Endothelial cell of umbilical vein (primary cell): ENCODE measurements at regions of chr3 and their contacts with region 1.

Region 1: GRCh38 chr3:139427283-139427993 is 38.0 kb upstream of the COPB2 start:
- DNase-seq: peak; percentile 69
- H3K4me3 ChIP-seq: no peak overlapping the region
- H3K27ac ChIP-seq: no peak overlapping the region
- H3K4me1 ChIP-seq: no peaks in the 10 kb centered on the region
- H3K27me3 ChIP-seq: no peaks in the 10 kb centered on the region
- CTCF ChIP-seq: peak; percentile 51 to 64
- POLR2A ChIP-seq: no peak

Region 2: DNA sequence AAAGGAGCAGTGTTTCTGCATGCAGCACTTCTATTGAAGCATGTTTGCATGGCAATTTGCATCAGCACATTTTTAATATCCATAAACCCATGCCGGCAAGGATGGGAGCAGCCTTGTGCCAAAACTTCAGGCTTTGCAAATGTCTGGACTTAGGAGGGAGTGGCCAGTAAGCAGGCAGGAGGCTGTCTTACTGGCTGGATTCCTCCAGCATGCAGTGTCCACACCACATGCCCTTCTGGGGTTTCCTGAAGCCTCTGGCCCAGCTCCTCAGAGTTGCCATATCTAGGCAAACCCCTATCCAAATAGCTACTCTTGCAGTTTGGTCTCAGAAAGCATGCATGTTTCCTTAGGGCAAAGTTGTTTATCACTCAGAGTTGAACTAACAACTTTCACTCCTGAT is 222.7 kb before region 1 on chr3:
- CTCF ChIA-PET with region 1: no interaction called
- POLR2A ChIA-PET with region 1: no interaction called
- dilution Hi-C with region 1: no loop called
- intact Hi-C with region 1: no loop called
- DNase-seq: no peak
- H3K4me3 ChIP-seq: no peak overlapping the region
- H3K27ac ChIP-seq: no peak overlapping the region
- H3K4me1 ChIP-seq: no peaks in the 10 kb centered on the region
- H3K27me3 ChIP-seq: no peaks in the 10 kb centered on the region
- CTCF ChIP-seq: no peak
- POLR2A ChIP-seq: no peak

Region 3: GRCh38 chr3:139561959-139562676 is 134.7 kb after region 1 on chr3:
- CTCF ChIA-PET with region 1: interaction called, 23 read pairs
- POLR2A ChIA-PET with region 1: no interaction called
- dilution Hi-C with region 1: no loop called
- intact Hi-C with region 1: loop called (anchors 1 kb)
- DNase-seq: peak; percentile 37
- H3K4me3 ChIP-seq: no peak overlapping the region
- H3K27ac ChIP-seq: no peak overlapping the region
- H3K4me1 ChIP-seq: no peaks in the 10 kb centered on the region
- H3K27me3 ChIP-seq: no peaks in the 10 kb centered on the region
- CTCF ChIP-seq: peak; percentile 36 to 63
- POLR2A ChIP-seq: no peak

Region 4: DNA sequence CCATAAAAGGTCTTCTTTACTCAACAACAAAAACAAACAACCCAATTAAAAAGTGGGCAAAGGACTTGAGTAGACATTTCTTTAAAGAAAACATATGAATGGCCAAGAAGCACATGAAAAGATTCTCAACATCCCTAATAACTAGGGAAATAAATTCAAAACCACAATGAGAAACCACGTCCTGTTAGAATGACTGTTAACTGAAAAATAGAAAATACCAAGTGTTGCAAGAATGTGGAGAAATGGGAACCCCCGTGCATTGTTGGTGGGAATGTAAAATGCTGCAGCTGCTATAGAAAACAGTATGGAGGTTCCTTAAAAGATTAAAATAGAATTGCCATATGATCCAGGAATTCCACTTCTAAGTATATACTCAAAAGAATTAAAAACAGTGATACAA is 215.6 kb after region 1 on chr3:
- CTCF ChIA-PET with region 1: no interaction called
- POLR2A ChIA-PET with region 1: no interaction called
- dilution Hi-C with region 1: no loop called
- intact Hi-C with region 1: no loop called
- DNase-seq: no peak
- H3K4me3 ChIP-seq: no peak overlapping the region
- H3K27ac ChIP-seq: no peak overlapping the region
- H3K4me1 ChIP-seq: no peaks in the 10 kb centered on the region
- H3K27me3 ChIP-seq: no peaks in the 10 kb centered on the region
- CTCF ChIP-seq: no peak
- POLR2A ChIP-seq: no peak

Region 5: DNA sequence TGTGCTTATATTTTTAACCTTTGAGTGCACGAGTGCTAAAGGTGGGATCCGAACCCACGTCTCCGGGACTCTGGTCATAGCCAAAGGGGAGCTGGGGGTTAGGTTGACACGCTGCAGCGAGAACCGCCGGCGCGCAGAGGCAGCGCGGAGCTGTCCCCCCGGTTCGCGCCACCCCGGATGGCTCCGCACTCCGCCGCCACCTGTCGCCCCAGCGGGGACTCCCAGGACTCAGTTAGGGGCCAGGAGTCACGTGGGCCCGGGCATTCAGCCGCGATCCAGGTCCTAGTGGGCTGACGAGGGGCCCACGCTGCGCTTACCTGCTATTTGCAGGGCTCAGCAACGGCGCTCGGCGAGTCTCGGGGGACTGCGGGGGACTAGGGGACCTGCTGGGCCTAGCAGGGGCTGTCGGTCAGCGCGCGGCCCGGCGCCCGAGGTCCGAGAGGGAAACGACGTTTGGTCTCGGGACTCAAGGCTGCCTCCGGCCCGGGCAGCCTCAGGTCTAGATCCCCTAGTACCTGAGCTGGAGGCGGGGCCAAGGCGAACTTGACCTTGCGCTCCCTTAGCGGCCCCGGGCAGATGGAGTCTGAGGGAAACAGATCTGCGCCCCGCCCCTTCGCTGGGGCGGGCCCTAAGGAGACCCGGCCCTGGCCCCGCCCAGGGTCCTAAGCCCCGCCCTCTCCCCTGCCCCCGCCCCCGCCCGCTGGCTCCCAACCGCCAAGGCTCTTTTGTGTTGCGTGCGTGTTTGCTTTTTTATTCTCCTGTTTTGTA is 250.1 kb after region 1 on chr3 and contains the start of gene NMNAT3:
- CTCF ChIA-PET with region 1: no interaction called
- POLR2A ChIA-PET with region 1: no interaction called
- dilution Hi-C with region 1: no loop called
- intact Hi-C with region 1: loop called (anchors 10 kb)
- DNase-seq: peak; percentile 62
- H3K4me3 ChIP-seq: peak within 1 kb of the TSS in 1 of 3 experiments; percentile 42
- H3K27ac ChIP-seq: no peak within 1 kb of the TSS
- H3K4me1 ChIP-seq: no peaks in the 10 kb centered on the region
- H3K27me3 ChIP-seq: no peaks in the 10 kb centered on the region
- CTCF ChIP-seq: no peak
- POLR2A ChIP-seq: no peak
- total RNA-seq, gene NMNAT3: 0.12 and 0.60 TPM in 2 replicates

Region 6: GRCh38 chr3:139764936-139765335 is 337.5 kb after region 1 on chr3:
- CTCF ChIA-PET with region 1: no interaction called
- POLR2A ChIA-PET with region 1: no interaction called
- dilution Hi-C with region 1: no loop called
- intact Hi-C with region 1: no loop called
- DNase-seq: no peak
- H3K4me3 ChIP-seq: no peak overlapping the region
- H3K27ac ChIP-seq: no peak overlapping the region
- H3K4me1 ChIP-seq: no peaks in the 10 kb centered on the region
- H3K27me3 ChIP-seq: no peaks in the 10 kb centered on the region
- CTCF ChIP-seq: no peak
- POLR2A ChIP-seq: no peak

Region 7: DNA sequence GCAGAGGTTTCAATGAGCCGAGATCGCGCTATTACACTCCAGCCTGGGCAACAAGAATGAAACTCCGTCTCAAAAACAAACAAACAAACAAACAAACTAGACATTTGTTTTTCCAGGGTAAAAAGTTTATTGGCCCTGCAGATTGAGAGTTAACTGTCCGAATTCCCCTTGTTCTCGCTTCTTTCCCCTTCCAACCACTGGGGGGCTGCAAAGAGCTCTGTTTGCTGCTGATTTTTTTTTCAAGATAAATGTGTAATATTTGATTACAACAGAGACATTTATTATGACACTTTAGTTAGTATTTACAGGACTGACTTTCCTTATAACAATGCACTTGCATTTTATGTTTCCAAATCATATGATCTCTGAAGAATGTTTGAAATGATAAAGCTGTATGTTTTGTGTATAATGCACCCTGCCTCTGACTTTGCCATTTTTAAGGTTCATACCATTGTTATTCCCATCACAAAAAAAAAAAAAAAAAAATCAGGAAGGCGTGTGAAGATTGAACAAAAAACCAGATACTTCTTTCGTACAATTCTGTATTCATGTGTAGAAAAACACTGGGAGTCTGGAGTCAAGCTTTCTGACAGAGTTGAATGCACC is 510.3 kb after region 1 on chr3:
- CTCF ChIA-PET with region 1: interaction called, 4 read pairs
- POLR2A ChIA-PET with region 1: no interaction called
- dilution Hi-C with region 1: no loop called
- intact Hi-C with region 1: loop called (anchors 1 kb)
- DNase-seq: peak; percentile 34
- H3K4me3 ChIP-seq: no peak overlapping the region
- H3K27ac ChIP-seq: no peak overlapping the region
- H3K4me1 ChIP-seq: no peaks in the 10 kb centered on the region
- H3K27me3 ChIP-seq: peaks cover 17 to 28% of the 10 kb centered on the region in 2 experiments
- CTCF ChIP-seq: peak; percentile 59
- POLR2A ChIP-seq: no peak

Region 8: GRCh38 chr3:140216249-140216648 is 788.8 kb after region 1 on chr3:
- CTCF ChIA-PET with region 1: no interaction called
- POLR2A ChIA-PET with region 1: no interaction called
- dilution Hi-C with region 1: no loop called
- intact Hi-C with region 1: loop called (anchors 5 kb)
- DNase-seq: no peak
- H3K4me3 ChIP-seq: no peak overlapping the region
- H3K27ac ChIP-seq: no peak overlapping the region
- H3K4me1 ChIP-seq: no peaks in the 10 kb centered on the region
- H3K27me3 ChIP-seq: no peaks in the 10 kb centered on the region
- CTCF ChIP-seq: peak; percentile 17 to 27
- POLR2A ChIP-seq: no peak

Region 9: GRCh38 chr3:140736863-140737460 is 1309.5 kb after region 1 on chr3:
- CTCF ChIA-PET with region 1: interaction called, 3 read pairs
- POLR2A ChIA-PET with region 1: no interaction called
- dilution Hi-C with region 1: no loop called
- intact Hi-C with region 1: loop called (anchors 2 kb)
- DNase-seq: peak; percentile 34
- H3K4me3 ChIP-seq: no peak overlapping the region
- H3K27ac ChIP-seq: no peak overlapping the region
- H3K4me1 ChIP-seq: no peaks in the 10 kb centered on the region
- H3K27me3 ChIP-seq: no peaks in the 10 kb centered on the region
- CTCF ChIP-seq: peak; percentile 15 to 27
- POLR2A ChIP-seq: no peak

Region 10: GRCh38 chr3:140863580-140864009 is 1436.2 kb after region 1 on chr3:
- CTCF ChIA-PET with region 1: interaction called, 31 read pairs
- POLR2A ChIA-PET with region 1: no interaction called
- dilution Hi-C with region 1: no loop called
- intact Hi-C with region 1: loop called (anchors 1 kb)
- DNase-seq: peak; percentile 58
- H3K4me3 ChIP-seq: no peak overlapping the region
- H3K27ac ChIP-seq: no peak overlapping the region
- H3K4me1 ChIP-seq: no peaks in the 10 kb centered on the region
- H3K27me3 ChIP-seq: no peaks in the 10 kb centered on the region
- CTCF ChIP-seq: peak; percentile 9 to 39
- POLR2A ChIP-seq: no peak